ENCODE measurements at regions of chr12 and their contacts with region 1.

Region 1: GRCh38 chr12:116123451-116124258 is 153.8 kb downstream of the MED13L start:
- DNase-seq: peak; percentile 67 to 75
- ATAC-seq: peak; percentile 84 to 87
- H3K4me3 ChIP-seq: peak overlapping the region in 3 of 4 donors; percentile 24 to 36 (median 31)
- H3K27ac ChIP-seq: peak overlapping the region; percentile 1 to 77 (median 73)
- H3K4me1 ChIP-seq: peaks cover 89 to 93% of the 10 kb centered on the region in 2 donors
- H3K27me3 ChIP-seq: no peaks in the 10 kb centered on the region
- CTCF ChIP-seq: no peak
- POLR2A ChIP-seq: no peak

Region 2: GRCh38 chr12:116009805-116010204 is 113.8 kb before region 1 on chr12:
- in situ Hi-C with region 1: no loop called
- intact Hi-C with region 1: loop called (anchors 10 kb)
- DNase-seq: no peak
- ATAC-seq: peak in 1 of 2 donors; percentile 22
- H3K4me3 ChIP-seq: no peak overlapping the region
- H3K27ac ChIP-seq: no peak overlapping the region
- H3K4me1 ChIP-seq: no peaks in the 10 kb centered on the region
- H3K27me3 ChIP-seq: no peaks in the 10 kb centered on the region
- CTCF ChIP-seq: peak in 2 of 5 experiments; percentile 23 to 31
- POLR2A ChIP-seq: no peak

Region 3: GRCh38 chr12:116060764-116061163 is 62.9 kb before region 1 on chr12:
- in situ Hi-C with region 1: no loop called
- intact Hi-C with region 1: loop called (anchors 5 kb)
- DNase-seq: no peak
- ATAC-seq: no peak
- H3K4me3 ChIP-seq: no peak overlapping the region
- H3K27ac ChIP-seq: peak overlapping the region in 3 of 4 donors; percentile 4 to 15 (median 8)
- H3K4me1 ChIP-seq: peaks cover 70 to 75% of the 10 kb centered on the region in 2 donors
- H3K27me3 ChIP-seq: no peaks in the 10 kb centered on the region
- CTCF ChIP-seq: no peak
- POLR2A ChIP-seq: no peak

Region 4: GRCh38 chr12:116164250-116165035 is 40.8 kb after region 1 on chr12:
- in situ Hi-C with region 1: no loop called
- intact Hi-C with region 1: loop called (anchors 5 kb)
- DNase-seq: no peak
- ATAC-seq: peak; percentile 19 to 52
- H3K4me3 ChIP-seq: peak overlapping the region in 3 of 4 donors; percentile 11 to 34 (median 31)
- H3K27ac ChIP-seq: peak overlapping the region; percentile 72 to 87 (median 78)
- H3K4me1 ChIP-seq: peaks cover 69 to 89% of the 10 kb centered on the region in 2 donors
- H3K27me3 ChIP-seq: no peaks in the 10 kb centered on the region
- CTCF ChIP-seq: no peak
- POLR2A ChIP-seq: no peak

Measured in gastrocnemius medialis (tissue), 4 donors.